ENCODE measurements at regions of chr11 and their contacts with region 1.

Region 1: DNA sequence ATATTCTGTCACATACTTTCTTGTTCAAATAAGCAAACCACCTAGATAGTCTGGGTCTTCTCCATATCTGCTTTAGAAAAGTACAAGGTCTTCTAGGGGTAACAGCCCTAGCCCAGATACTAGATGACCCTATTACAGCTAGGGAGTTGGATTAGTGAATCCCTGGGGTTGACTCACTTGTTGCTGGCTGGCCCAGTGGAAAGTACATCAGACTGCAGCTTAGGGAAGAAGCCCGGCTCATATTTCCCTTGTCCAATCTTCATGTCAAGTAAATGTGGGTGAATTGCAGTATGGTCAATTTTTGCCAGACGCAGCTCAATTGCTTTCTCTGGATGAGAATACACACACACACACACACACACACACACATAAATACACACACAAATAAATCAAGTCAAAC is 79.1 kb upstream of the SCUBE2 start:
- DNase-seq: no peak
- ATAC-seq: no peak
- H3K4me3 ChIP-seq: no peak overlapping the region
- H3K27ac ChIP-seq: no peak overlapping the region
- H3K4me1 ChIP-seq: peaks cover 4% of the 10 kb centered on the region; the same call in 1 of the 2 replicates
- H3K27me3 ChIP-seq: no peaks in the 10 kb centered on the region
- CTCF ChIP-seq: no peak
- EP300 ChIP-seq: no peak
- POLR2A ChIP-seq: no peak
- RAD21 ChIP-seq: no peak

Region 2: GRCh38 chr11:9120664-9121485 is 49.6 kb before region 1 on chr11:
- CTCF ChIA-PET with region 1: no interaction called
- POLR2A ChIA-PET with region 1: no interaction called
- in situ Hi-C with region 1: no loop called
- intact Hi-C with region 1: no loop called
- DNase-seq: no peak
- ATAC-seq: peak; percentile 98
- H3K4me3 ChIP-seq: no peak overlapping the region
- H3K27ac ChIP-seq: no peak overlapping the region
- H3K4me1 ChIP-seq: no peaks in the 10 kb centered on the region
- H3K27me3 ChIP-seq: no peaks in the 10 kb centered on the region
- CTCF ChIP-seq: peak; percentile 63
- EP300 ChIP-seq: no peak
- POLR2A ChIP-seq: no peak
- RAD21 ChIP-seq: no peak

Region 3: GRCh38 chr11:9428706-9429105 is 258.3 kb after region 1 on chr11:
- CTCF ChIA-PET with region 1: no interaction called
- POLR2A ChIA-PET with region 1: no interaction called
- in situ Hi-C with region 1: no loop called
- intact Hi-C with region 1: no loop called
- DNase-seq: peak; percentile 22
- ATAC-seq: peak; percentile 75
- H3K4me3 ChIP-seq: no peak overlapping the region
- H3K27ac ChIP-seq: no peak overlapping the region
- H3K4me1 ChIP-seq: no peaks in the 10 kb centered on the region
- H3K27me3 ChIP-seq: no peaks in the 10 kb centered on the region
- CTCF ChIP-seq: no peak
- EP300 ChIP-seq: no peak
- POLR2A ChIP-seq: no peak
- RAD21 ChIP-seq: no peak

Region 4: GRCh38 chr11:9516113-9516512 is 345.7 kb after region 1 on chr11:
- CTCF ChIA-PET with region 1: no interaction called
- POLR2A ChIA-PET with region 1: no interaction called
- in situ Hi-C with region 1: no loop called
- intact Hi-C with region 1: loop called (anchors 10 kb)
- DNase-seq: no peak
- ATAC-seq: no peak; the same call in 2 of the 3 replicates
- H3K4me3 ChIP-seq: no peak overlapping the region
- H3K27ac ChIP-seq: no peak overlapping the region
- H3K4me1 ChIP-seq: peaks cover 38% of the 10 kb centered on the region
- H3K27me3 ChIP-seq: no peaks in the 10 kb centered on the region
- CTCF ChIP-seq: no peak
- EP300 ChIP-seq: no peak
- POLR2A ChIP-seq: no peak
- RAD21 ChIP-seq: no peak